Activated CD8-positive, alpha-beta T cell treated with anti-CD3 and anti-CD28 coated beads, Interleukin-2, amount 10 ng/mL, durations not matched to agents 7 days and 5 days (primary cell): ENCODE measurements at regions of chr14 and their contacts with region 1.

Region 1: GRCh38 chr14:106417224-106418049 is 891.1 kb downstream of the TMEM121 start:
- DNase-seq: peak; percentile 92
- ATAC-seq: peak; percentile 92
- H3K4me3 Mint-ChIP-seq: no peak overlapping the region
- H3K27ac Mint-ChIP-seq: no peak overlapping the region
- H3K4me1 Mint-ChIP-seq: no peaks in the 10 kb centered on the region
- H3K27me3 Mint-ChIP-seq: peaks cover 16% of the 10 kb centered on the region

Region 2: GRCh38 chr14:106286697-106287290 is 130.6 kb before region 1 on chr14:
- CTCF ChIA-PET with region 1: no interaction called
- POLR2A ChIA-PET with region 1: no interaction called
- DNase-seq: no peak
- ATAC-seq: no peak
- H3K4me3 Mint-ChIP-seq: no peak overlapping the region
- H3K27ac Mint-ChIP-seq: no peak overlapping the region
- H3K4me1 Mint-ChIP-seq: no peaks in the 10 kb centered on the region
- H3K27me3 Mint-ChIP-seq: peaks cover 15% of the 10 kb centered on the region

Region 3: DNA sequence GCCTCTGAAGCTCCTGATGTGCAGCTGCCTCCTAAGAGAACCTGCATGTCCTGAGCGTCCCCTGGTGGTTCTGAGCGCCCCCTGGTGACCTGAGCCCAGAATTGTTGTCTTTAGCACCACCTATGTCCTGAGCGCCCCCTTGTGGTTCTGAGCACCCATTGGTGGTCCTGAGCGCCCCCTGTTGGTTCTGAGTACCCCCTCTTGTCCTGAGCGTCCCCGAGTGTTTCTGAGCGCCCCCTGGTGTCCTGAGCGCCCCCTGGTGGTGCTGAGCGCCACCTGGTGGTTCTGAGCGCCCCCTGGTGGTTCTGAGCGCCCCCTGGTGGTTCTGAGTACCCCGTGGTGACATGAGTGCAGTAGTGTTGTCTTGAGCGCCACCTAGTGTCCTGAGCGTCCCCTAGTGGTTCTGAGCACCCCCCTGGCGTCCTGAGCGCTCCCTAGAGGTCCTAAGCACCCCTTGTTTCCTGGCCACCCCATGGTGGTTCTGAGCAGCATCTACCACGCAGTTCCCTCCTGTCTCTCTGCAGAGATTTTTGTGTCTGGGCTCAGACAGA is 108.5 kb before region 1 on chr14:
- CTCF ChIA-PET with region 1: interaction called, 10 read pairs
- POLR2A ChIA-PET with region 1: no interaction called
- DNase-seq: peak; percentile 74
- ATAC-seq: peak; percentile 84
- H3K4me3 Mint-ChIP-seq: no peak overlapping the region
- H3K27ac Mint-ChIP-seq: no peak overlapping the region
- H3K4me1 Mint-ChIP-seq: no peaks in the 10 kb centered on the region
- H3K27me3 Mint-ChIP-seq: peaks cover 26% of the 10 kb centered on the region

Region 4: DNA sequence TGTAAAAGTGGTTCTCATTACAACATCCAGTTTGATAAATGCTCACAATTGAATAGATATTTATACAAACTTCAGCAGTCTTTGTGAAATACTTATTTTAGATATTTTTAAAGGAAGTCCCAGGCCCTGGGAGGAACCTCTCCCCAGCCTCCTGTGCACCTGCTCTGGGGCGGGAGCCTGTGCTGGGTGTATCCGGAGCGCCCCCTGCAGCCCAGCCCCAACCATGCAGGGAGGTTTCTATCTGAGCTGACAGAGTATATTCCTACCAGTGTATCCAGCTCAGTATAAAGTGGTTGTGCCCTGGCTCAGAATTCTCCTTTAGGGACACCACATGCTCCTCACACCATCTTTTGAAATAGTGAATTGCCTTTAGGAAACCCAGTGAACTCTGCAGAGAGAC is 39.2 kb before region 1 on chr14:
- CTCF ChIA-PET with region 1: interaction called, 68 read pairs
- POLR2A ChIA-PET with region 1: no interaction called
- DNase-seq: peak; percentile 59
- ATAC-seq: peak; percentile 56
- H3K4me3 Mint-ChIP-seq: no peak overlapping the region
- H3K27ac Mint-ChIP-seq: no peak overlapping the region
- H3K4me1 Mint-ChIP-seq: peaks cover 21% of the 10 kb centered on the region
- H3K27me3 Mint-ChIP-seq: peaks cover 17% of the 10 kb centered on the region

Region 5: DNA sequence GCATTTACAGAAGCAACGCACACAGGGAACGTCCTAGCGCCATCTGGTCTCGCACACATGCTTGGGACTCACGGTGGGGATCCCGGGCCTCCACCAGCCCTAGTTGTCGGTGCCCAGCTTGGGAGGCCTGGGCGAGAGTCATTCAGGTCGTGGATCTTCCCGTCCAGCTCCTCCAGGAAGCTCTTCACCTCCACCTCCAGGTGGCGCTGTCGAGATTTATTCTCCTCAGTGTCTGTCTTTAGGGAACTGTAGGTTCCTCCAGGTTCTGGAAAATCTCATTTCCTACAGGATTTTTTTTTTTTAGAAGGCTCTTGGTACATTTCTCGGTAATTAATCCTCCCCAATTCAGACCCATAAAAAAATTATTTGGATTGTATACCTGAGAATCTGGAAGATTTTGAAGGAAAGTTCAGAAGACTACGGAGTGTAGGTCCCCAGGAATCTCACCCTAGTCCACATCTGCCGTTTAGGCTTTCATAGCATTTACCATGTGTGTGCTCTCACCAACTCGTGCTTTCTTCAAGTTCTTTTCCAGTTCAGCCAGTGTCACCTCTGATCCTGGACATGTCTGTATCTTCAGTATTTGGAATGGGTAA is 19.0 kb after region 1 on chr14:
- CTCF ChIA-PET with region 1: no interaction called
- POLR2A ChIA-PET with region 1: no interaction called
- DNase-seq: no peak
- ATAC-seq: no peak
- H3K4me3 Mint-ChIP-seq: no peak overlapping the region
- H3K27ac Mint-ChIP-seq: no peak overlapping the region
- H3K4me1 Mint-ChIP-seq: no peaks in the 10 kb centered on the region
- H3K27me3 Mint-ChIP-seq: no peaks in the 10 kb centered on the region

Region 6: GRCh38 chr14:106491851-106492250 is 74.4 kb after region 1 on chr14:
- CTCF ChIA-PET with region 1: interaction called, 108 read pairs
- POLR2A ChIA-PET with region 1: interaction called, 4 read pairs
- DNase-seq: peak; percentile 47
- ATAC-seq: no peak
- H3K4me3 Mint-ChIP-seq: no peak overlapping the region
- H3K27ac Mint-ChIP-seq: no peak overlapping the region
- H3K4me1 Mint-ChIP-seq: peaks cover 34% of the 10 kb centered on the region
- H3K27me3 Mint-ChIP-seq: peaks cover 2% of the 10 kb centered on the region

Region 7: GRCh38 chr14:106518054-106518943 is 100.9 kb after region 1 on chr14:
- CTCF ChIA-PET with region 1: interaction called, 240 read pairs
- POLR2A ChIA-PET with region 1: no interaction called
- DNase-seq: peak; percentile 91
- ATAC-seq: peak; percentile 81
- H3K4me3 Mint-ChIP-seq: no peak overlapping the region
- H3K27ac Mint-ChIP-seq: no peak overlapping the region
- H3K4me1 Mint-ChIP-seq: peaks cover 14% of the 10 kb centered on the region
- H3K27me3 Mint-ChIP-seq: peaks cover 34% of the 10 kb centered on the region

Region 8: DNA sequence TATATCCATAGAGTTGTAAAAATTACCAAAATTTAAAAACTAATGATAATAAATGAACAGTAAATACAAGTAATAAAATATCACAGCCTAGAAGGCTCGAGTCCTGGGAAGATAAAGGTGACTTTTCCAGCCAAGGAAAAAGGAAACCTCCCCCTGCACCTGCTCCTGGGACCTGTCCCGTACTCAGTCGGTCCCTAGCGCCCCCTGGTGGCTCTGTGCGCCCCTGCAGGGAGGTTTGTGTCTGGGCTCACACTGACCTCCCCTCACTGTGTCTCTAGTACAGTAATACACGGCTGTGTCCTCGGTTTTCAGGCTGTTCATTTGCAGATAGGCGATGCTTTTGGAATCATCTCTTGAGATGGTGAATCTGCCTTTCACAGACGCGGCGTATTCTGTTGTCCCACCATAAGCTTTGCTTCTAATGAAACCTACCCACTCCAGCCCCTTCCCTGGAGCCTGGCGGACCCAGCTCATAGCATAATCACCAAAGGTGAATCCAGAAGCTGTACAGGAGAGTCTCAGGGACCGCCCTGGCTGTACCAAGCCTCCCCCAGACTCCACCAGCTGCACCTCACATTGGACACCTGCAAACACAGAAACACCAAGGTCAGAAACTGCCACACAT is 139.3 kb after region 1 on chr14:
- CTCF ChIA-PET with region 1: interaction called, 29 read pairs
- POLR2A ChIA-PET with region 1: no interaction called
- DNase-seq: peak; percentile 80
- ATAC-seq: peak; percentile 44
- H3K4me3 Mint-ChIP-seq: no peak overlapping the region
- H3K27ac Mint-ChIP-seq: no peak overlapping the region
- H3K4me1 Mint-ChIP-seq: no peaks in the 10 kb centered on the region
- H3K27me3 Mint-ChIP-seq: peaks cover 29% of the 10 kb centered on the region

Region 9: GRCh38 chr14:106657460-106657859 is 240.0 kb after region 1 on chr14:
- CTCF ChIA-PET with region 1: interaction called, 32 read pairs
- POLR2A ChIA-PET with region 1: no interaction called
- DNase-seq: peak; percentile 77
- ATAC-seq: peak; percentile 61
- H3K4me3 Mint-ChIP-seq: no peak overlapping the region
- H3K27ac Mint-ChIP-seq: no peak overlapping the region
- H3K4me1 Mint-ChIP-seq: peaks cover 27% of the 10 kb centered on the region
- H3K27me3 Mint-ChIP-seq: peaks cover 25% of the 10 kb centered on the region